ENCODE measurements at regions of chr9 and their contacts with region 1.

Region 1: DNA sequence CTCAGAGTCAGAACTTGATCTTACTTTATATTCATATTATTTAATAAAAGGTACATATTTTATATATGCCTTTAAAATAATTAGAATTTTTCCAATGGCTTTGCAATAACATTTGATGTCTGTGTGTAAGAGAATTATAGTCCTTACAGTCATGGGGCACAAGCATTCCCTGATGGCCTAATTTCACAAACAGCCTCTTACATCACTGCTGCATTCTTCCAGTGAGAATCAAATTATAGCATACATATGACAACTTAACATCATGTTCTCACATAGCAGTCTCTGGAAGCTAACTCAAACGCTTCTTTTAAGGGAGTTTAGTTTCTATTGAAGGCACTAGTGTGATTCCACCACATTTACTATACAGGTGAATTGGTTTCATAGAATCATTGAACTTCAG is 15.3 kb upstream of the PRUNE2 start:
- DNase-seq: no peak
- ATAC-seq: no peak
- H3K4me3 ChIP-seq: no peak overlapping the region
- H3K27ac ChIP-seq: no peak overlapping the region
- H3K4me1 ChIP-seq: no peaks in the 10 kb centered on the region
- H3K27me3 ChIP-seq: peaks cover 3% of the 10 kb centered on the region
- CTCF ChIP-seq: no peak

Region 2: GRCh38 chr9:76969716-76970115 is 48.6 kb after region 1 on chr9:
- CTCF ChIA-PET with region 1: no interaction called
- POLR2A ChIA-PET with region 1: no interaction called
- in situ Hi-C with region 1: no loop called
- intact Hi-C with region 1: loop called (anchors 5 kb)
- DNase-seq: no peak
- ATAC-seq: no peak
- H3K4me3 ChIP-seq: no peak overlapping the region
- H3K27ac ChIP-seq: no peak overlapping the region
- H3K4me1 ChIP-seq: no peaks in the 10 kb centered on the region
- H3K27me3 ChIP-seq: no peaks in the 10 kb centered on the region
- CTCF ChIP-seq: no peak

Region 3: DNA sequence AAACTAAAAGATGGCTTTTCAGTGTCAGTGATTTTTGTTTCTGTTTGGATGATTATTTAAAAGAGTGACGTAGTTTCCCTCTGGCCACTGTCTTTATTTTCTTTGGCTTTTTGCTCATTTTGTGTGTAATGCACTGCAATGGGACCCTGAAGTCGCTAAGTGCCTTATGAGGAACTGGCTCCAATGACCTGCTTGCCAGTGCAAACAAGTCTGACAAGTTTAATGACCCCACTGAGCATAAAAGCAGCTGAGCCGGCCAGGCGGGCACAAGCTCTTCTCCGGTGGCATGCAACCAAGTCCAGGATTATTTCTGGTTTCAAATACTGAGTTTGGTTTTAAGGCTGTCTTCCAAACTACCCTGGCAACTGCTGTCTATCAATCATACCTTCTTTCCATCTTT is 742.6 kb after region 1 on chr9:
- CTCF ChIA-PET with region 1: no interaction called
- POLR2A ChIA-PET with region 1: no interaction called
- in situ Hi-C with region 1: no loop called
- intact Hi-C with region 1: no loop called
- DNase-seq: no peak
- ATAC-seq: no peak
- H3K4me3 ChIP-seq: no peak overlapping the region
- H3K27ac ChIP-seq: no peak overlapping the region
- H3K4me1 ChIP-seq: no peaks in the 10 kb centered on the region
- H3K27me3 ChIP-seq: no peaks in the 10 kb centered on the region
- CTCF ChIP-seq: no peak

Measured in Panc1 (cell line).